GM10248 (cell line): ENCODE measurements at regions of chr10 and their contacts with region 1.

Region 1: GRCh38 chr10:32298054-32298812 is 48.7 kb downstream of the EPC1 start:
- DNase-seq: no peak
- CTCF ChIP-seq: no peak

Region 2: DNA sequence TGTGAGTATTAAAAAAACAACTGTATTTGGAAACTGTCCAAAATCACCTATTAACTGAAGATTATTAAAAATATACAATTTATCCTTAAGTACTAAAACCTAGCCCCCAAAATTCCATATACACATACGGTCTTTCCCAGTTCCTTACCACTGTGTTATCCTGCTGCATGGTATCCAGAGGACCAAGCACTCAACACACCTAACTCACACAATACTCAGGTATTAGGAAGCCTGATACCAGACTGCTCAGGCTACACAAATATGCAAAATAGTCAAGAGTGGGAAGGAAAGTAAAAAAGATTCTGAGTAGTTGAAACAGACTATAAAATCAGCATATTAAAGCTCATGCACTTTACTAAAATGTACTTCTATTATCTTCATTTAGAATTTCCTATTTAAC is 18.4 kb before region 1 on chr10:
- CTCF ChIA-PET with region 1: interaction called, 17 read pairs
- POLR2A ChIA-PET with region 1: no interaction called
- DNase-seq: no peak
- CTCF ChIP-seq: no peak